H1 (cell line): ENCODE measurements at regions of chr19 and their contacts with region 1.

Region 1: GRCh38 chr19:47075179-47075810 is 26.9 kb upstream of the TMEM160 start:
- DNase-seq: no peak
- H3K4me3 ChIP-seq: no peak overlapping the region
- H3K27ac ChIP-seq: 0 out of 2 replicates have a peak overlapping the region, but pooled peaks have one; percentile 2
- H3K4me1 ChIP-seq: no peaks in the 10 kb centered on the region
- H3K27me3 ChIP-seq: no peaks in the 10 kb centered on the region
- CTCF ChIP-seq: no peak
- EP300 ChIP-seq: no peak
- POLR2A ChIP-seq: no peak
- RAD21 ChIP-seq: no peak

Region 2: DNA sequence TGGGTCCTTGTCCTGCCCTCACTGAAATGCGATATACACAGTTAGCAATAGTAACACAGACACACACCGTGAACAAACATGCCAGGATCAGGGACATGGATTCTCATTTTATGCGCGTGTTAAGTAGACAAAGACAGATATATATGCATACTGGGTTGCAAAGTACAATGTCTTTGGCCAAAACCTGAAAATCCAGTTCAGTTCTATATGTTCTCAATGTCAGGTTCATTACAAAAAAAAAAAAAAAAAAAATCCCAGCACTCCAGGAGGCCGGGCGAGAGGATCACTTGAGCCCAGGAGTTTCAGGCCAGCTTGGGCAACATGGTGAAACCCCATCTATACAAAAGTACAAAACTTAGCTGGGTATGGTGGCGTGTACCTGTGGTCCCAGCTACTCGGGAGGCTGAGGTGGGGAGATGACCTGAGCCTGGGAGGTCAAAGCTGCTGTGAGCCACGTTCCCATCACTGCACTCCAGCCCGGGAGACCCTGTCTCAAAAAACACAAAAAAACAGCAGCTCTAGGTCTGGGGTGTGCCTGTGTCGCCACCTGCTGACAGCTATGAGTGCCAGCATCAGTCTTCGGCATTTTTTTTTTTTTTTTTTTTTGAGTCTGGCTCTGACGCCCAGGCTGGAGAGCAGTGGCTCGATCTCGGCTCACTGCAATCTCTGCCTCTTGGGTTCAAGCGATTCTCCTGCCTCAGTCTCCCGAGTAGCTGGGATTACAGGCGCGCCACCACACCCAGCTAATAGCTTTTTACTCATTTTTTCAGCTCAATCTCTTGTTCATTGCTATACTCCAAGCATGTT is 235.0 kb before region 1 on chr19:
- CTCF ChIA-PET with region 1: no interaction called
- POLR2A ChIA-PET with region 1: no interaction called
- DNase-seq: peak in 1 of 2 experiments; percentile 60
- H3K4me3 ChIP-seq: no peak overlapping the region
- H3K27ac ChIP-seq: 0 out of 2 replicates have a peak overlapping the region, but pooled peaks have one; percentile 44
- H3K4me1 ChIP-seq: no peaks in the 10 kb centered on the region
- H3K27me3 ChIP-seq: no peaks in the 10 kb centered on the region
- CTCF ChIP-seq: peak; percentile 78 to 93 (median 85)
- EP300 ChIP-seq: no peak
- POLR2A ChIP-seq: no peak
- RAD21 ChIP-seq: peak; percentile 88 to 90

Region 3: GRCh38 chr19:47063874-47064273 is 11.4 kb before region 1 on chr19:
- CTCF ChIA-PET with region 1: interaction called, 15 read pairs
- POLR2A ChIA-PET with region 1: interaction called, 8 read pairs
- DNase-seq: no peak
- H3K4me3 ChIP-seq: no peak overlapping the region
- H3K27ac ChIP-seq: no peak overlapping the region
- H3K4me1 ChIP-seq: no peaks in the 10 kb centered on the region; a peak in 1 of 7 replicates
- H3K27me3 ChIP-seq: no peaks in the 10 kb centered on the region
- CTCF ChIP-seq: no peak
- EP300 ChIP-seq: no peak
- POLR2A ChIP-seq: no peak
- RAD21 ChIP-seq: no peak

Region 4: GRCh38 chr19:47094557-47095475 is 19.5 kb after region 1 on chr19:
- CTCF ChIA-PET with region 1: interaction called, 32 read pairs
- POLR2A ChIA-PET with region 1: interaction called, 6 read pairs
- DNase-seq: no peak
- H3K4me3 ChIP-seq: no peak overlapping the region
- H3K27ac ChIP-seq: no peak overlapping the region; the same call in 1 of the 2 replicates
- H3K4me1 ChIP-seq: peaks cover 2 to 8% (median 4%) of the 10 kb centered on the region in 4 experiments; a peak in 3 of 7 replicates
- H3K27me3 ChIP-seq: no peaks in the 10 kb centered on the region; a peak in 1 of 7 replicates
- CTCF ChIP-seq: no peak
- EP300 ChIP-seq: no peak
- POLR2A ChIP-seq: no peak
- RAD21 ChIP-seq: no peak

Region 5: DNA sequence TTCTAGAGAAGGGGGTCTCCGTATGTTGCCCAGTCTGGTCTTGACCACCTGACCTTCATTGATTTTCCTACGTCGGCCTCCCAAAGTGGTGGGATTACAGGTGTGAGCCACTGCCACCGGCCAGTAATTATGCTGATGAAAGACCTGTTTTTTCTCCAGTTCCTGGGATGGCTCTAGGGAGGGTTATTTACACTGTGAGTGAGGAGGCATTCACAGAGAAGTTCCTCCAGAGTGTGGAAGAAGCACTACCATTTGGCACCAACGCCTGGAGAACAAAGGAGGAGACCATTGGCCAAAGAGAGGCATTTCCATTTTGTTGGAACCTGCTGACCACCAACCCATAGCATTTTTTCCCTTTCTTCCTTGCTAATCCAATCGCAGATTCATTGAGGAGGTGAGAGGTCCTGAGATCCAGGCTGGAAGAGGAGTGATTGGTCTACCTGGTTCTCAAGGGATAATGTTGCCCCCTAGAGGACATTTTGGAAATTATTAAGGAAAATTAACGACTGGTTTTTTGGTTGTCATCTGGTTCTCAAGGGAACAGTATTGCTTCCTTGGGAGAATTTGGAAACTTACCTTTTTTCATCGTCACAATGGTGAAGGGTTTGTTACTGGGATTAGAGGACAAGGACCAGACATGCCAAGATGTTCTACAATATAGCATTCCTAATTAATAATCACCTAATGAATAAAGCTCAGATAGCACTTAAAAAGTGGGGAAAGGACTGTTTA is 49.8 kb after region 1 on chr19:
- CTCF ChIA-PET with region 1: interaction called, 28 read pairs
- POLR2A ChIA-PET with region 1: interaction called, 5 read pairs
- DNase-seq: no peak
- H3K4me3 ChIP-seq: no peak overlapping the region
- H3K27ac ChIP-seq: no peak overlapping the region
- H3K4me1 ChIP-seq: peaks cover 0 to 4% (median 1%) of the 10 kb centered on the region in 4 experiments; a peak in 1 of 7 replicates
- H3K27me3 ChIP-seq: no peaks in the 10 kb centered on the region
- CTCF ChIP-seq: peak in 2 of 3 experiments; percentile 63 to 67; a peak in 2 of 4 replicates
- EP300 ChIP-seq: no peak
- POLR2A ChIP-seq: no peak
- RAD21 ChIP-seq: peak; percentile 81 to 84

Region 6: DNA sequence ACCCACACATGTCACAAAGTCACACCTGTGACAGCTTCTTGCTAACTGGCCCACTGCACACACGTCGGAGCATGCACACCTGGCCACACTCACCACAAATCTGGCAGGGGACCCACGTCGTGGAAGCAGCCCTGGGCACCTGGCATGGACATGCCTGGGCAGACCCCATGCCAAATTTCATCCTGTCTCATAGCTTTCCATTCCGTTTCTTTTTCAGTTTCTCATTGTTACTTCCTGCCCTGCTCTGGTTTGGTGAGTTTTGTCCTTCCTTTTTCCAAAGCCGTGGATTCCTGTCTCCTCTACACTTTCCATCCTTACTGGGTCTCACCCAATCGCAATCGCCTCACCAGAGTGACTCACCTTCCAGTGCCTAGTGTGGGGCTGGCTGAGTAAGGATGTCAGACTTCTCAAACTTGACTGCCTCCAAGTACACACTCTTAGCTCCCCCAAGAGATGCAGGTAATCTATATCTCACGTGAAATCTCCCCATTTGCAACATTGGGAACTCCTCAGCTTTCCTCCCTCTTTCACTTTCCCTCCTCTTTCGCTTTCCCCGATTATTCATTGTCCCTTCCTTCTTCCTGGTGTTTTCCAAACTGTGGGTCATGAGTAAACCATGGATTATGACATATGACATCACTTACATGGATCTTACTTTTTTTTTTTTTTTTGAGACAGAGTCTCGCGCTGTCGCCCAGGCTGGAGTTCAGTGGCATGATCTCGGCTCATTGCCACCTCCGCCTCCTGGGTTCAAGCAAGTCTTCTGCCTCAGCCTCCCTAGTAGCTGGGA is 157.3 kb after region 1 on chr19:
- CTCF ChIA-PET with region 1: no interaction called
- POLR2A ChIA-PET with region 1: no interaction called
- DNase-seq: no peak
- H3K4me3 ChIP-seq: no peak overlapping the region
- H3K27ac ChIP-seq: peak overlapping the region; percentile 65
- H3K4me1 ChIP-seq: peaks cover 12 to 29% (median 21%) of the 10 kb centered on the region in 4 experiments
- H3K27me3 ChIP-seq: no peaks in the 10 kb centered on the region; a peak in 2 of 7 replicates
- CTCF ChIP-seq: no peak
- EP300 ChIP-seq: no peak
- POLR2A ChIP-seq: 0 out of 3 replicates have a peak, but pooled peaks of 1 of the 2 experiments have one; percentile 48
- RAD21 ChIP-seq: no peak